Heart right ventricle (tissue), 16 donors: ENCODE measurements at regions of chrX and their contacts with region 1.

Region 1: GRCh38 chrX:69216911-69217310 is 51.7 kb upstream of the PJA1 start:
- DNase-seq: no peak
- ATAC-seq: peak in 2 of 8 donors; percentile 37 to 43
- H3K4me3 ChIP-seq: no peak overlapping the region
- H3K27ac ChIP-seq: no peak overlapping the region
- H3K4me1 ChIP-seq: peaks cover 0 to 3% (median 0%) of the 10 kb centered on the region in 9 donors
- H3K27me3 ChIP-seq: peaks cover 0 to 16% (median 0%) of the 10 kb centered on the region in 7 donors
- CTCF ChIP-seq: no peak

Region 2: DNA sequence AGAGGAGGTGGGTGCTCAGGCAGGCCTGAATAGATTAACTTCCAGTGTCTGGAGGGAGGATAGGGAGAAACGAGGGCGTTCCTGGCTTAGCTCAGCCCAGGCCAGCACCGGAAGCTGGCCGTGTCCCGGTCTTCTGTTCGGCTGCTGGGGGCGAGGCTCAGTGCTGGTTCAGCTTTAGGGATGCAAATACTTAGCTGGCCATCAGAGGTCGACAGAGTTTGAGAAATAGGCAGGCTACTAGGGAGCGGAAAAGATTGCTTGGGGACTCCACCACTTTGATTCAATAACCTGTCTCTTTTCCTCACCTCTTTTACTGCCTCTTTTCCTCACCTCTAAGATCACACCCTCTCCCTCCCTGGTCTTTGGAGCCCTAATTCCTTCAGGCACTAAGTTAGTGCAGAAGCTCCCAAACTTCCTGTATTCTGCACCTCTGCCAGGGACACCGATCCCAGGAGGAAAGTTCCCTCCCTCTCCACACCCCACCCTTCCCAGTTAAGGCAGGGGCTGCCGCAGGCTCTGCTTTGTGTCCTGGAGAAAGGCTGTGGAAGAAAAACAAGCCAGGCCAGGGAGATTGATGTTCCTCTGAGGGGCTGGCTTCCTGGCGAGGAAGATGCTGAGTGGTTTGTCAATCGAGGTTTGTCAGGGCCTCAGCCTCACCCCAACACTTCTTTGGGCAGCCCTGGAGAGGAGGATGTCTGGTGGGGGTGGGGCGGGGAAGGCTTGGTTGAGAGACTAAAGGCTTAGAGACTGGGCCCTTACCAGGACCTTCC is 394.1 kb before region 1 on chrX:
- intact Hi-C with region 1: loop called (anchors 1 to 5 kb)
- DNase-seq: peak in 1 of 2 donors; percentile 40
- ATAC-seq: peak; percentile 79 to 93 (median 90)
- H3K4me3 ChIP-seq: no peak overlapping the region
- H3K27ac ChIP-seq: no peak overlapping the region
- H3K4me1 ChIP-seq: peaks cover 0 to 9% (median 0%) of the 10 kb centered on the region in 9 donors
- H3K27me3 ChIP-seq: peaks cover 0 to 56% (median 0%) of the 10 kb centered on the region in 7 donors
- CTCF ChIP-seq: peak; percentile 33 to 75 (median 67)

Region 3: GRCh38 chrX:69093960-69094871 is 122.7 kb before region 1 on chrX:
- intact Hi-C with region 1: loop called in 7 of 10 experiments (anchors 2 to 10 kb)
- DNase-seq: peak in 1 of 2 donors; percentile 45
- ATAC-seq: peak; percentile 32 to 72 (median 56)
- H3K4me3 ChIP-seq: no peak overlapping the region
- H3K27ac ChIP-seq: no peak overlapping the region
- H3K4me1 ChIP-seq: peaks cover 0 to 4% (median 0%) of the 10 kb centered on the region in 9 donors
- H3K27me3 ChIP-seq: peaks cover 0 to 21% (median 0%) of the 10 kb centered on the region in 7 donors
- CTCF ChIP-seq: peak; percentile 31 to 66 (median 55)

Region 4: GRCh38 chrX:69165087-69165651 is 51.7 kb before region 1 on chrX and contains the start of gene PJA1:
- intact Hi-C with region 1: loop called in 1 of 10 experiments (anchors 10 kb)
- DNase-seq: peak; percentile 68 to 78
- ATAC-seq: peak; percentile 93 to 98 (median 98)
- H3K4me3 ChIP-seq: peak within 1 kb of the TSS; percentile 55 to 84 (median 71)
- H3K27ac ChIP-seq: peak within 1 kb of the TSS in 9 of 10 donors; percentile 52 to 88 (median 79)
- H3K4me1 ChIP-seq: peaks cover 0 to 8% (median 3%) of the 10 kb centered on the region in 9 donors
- H3K27me3 ChIP-seq: peaks cover 0 to 36% (median 0%) of the 10 kb centered on the region in 7 donors
- CTCF ChIP-seq: no peak
- total RNA-seq, gene PJA1: 9.0 to 20.2 (median 16.6) TPM

Region 5: GRCh38 chrX:69268611-69269010 is 51.7 kb after region 1 on chrX:
- intact Hi-C with region 1: no loop called
- DNase-seq: no peak
- ATAC-seq: no peak
- H3K4me3 ChIP-seq: no peak overlapping the region
- H3K27ac ChIP-seq: no peak overlapping the region
- H3K4me1 ChIP-seq: no peaks in the 10 kb centered on the region
- H3K27me3 ChIP-seq: peaks cover 0 to 41% (median 0%) of the 10 kb centered on the region in 7 donors
- CTCF ChIP-seq: no peak